ENCODE measurements at regions of chr16 and their contacts with region 1.

Region 1: GRCh38 chr16:5490499-5490898 is 392.9 kb upstream of the EEF2KMT start:
- DNase-seq: peak; percentile 29 to 84 (median 62)

Region 2: DNA sequence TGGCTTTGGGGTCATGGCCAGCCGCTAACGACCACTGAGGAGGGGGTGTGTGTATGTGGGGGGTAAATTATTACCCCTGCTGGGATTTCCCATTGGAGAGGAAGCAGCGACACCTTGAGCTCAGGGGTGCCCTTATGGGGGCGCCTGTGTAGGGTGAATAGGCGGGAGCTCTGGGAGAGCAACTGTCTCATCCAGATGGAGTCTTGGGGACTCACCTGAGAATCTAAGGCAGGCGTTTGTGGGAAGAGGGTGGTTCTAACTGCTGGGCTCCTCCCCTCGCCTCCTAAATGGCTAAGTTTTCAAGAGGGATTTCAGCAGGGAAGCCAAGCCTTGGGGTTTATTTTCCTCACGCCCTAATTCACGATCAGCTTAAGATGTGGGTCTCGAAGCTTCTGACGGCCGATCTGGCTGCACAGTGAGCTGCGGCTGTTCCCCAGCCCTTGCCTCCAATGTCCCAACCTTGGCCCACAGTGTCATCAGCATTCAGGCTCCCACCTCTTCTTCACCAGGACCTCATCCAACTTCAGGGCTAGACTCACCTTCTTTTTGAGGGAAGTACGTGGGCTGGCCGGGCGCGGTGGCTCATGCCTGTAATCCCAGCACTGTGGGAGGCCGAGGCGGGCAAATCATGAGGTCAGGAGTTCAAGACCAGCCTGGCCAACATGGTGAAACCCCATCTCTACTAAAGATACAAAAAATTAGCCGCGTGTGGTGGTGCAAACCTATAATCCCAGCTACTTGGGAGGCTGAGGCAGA is 256.0 kb before region 1 on chr16:
- intact Hi-C with region 1: loop called (anchors 10 kb)
- DNase-seq: no peak

Region 3: GRCh38 chr16:5412728-5413127 is 77.8 kb before region 1 on chr16:
- intact Hi-C with region 1: no loop called
- DNase-seq: peak; percentile 4 to 75 (median 34)

Measured in head of caudate nucleus (tissue), 42 donors.